Activated CD4-positive, alpha-beta T cell treated with anti-CD3 and anti-CD28 coated beads, Interleukin-2, amount 10 ng/mL, durations not matched to agents 24 days and 14 days (primary cell): ENCODE measurements at regions of chr3 and their contacts with region 1.

Region 1: GRCh38 chr3:8111069-8111798 is 390.4 kb upstream of the LMCD1 start:
- DNase-seq: peak; percentile 86
- H3K4me3 Mint-ChIP-seq: peak overlapping the region; percentile 27
- H3K27ac Mint-ChIP-seq: no peak overlapping the region
- H3K4me1 Mint-ChIP-seq: peaks cover 2% of the 10 kb centered on the region
- H3K27me3 Mint-ChIP-seq: no peaks in the 10 kb centered on the region

Region 2: DNA sequence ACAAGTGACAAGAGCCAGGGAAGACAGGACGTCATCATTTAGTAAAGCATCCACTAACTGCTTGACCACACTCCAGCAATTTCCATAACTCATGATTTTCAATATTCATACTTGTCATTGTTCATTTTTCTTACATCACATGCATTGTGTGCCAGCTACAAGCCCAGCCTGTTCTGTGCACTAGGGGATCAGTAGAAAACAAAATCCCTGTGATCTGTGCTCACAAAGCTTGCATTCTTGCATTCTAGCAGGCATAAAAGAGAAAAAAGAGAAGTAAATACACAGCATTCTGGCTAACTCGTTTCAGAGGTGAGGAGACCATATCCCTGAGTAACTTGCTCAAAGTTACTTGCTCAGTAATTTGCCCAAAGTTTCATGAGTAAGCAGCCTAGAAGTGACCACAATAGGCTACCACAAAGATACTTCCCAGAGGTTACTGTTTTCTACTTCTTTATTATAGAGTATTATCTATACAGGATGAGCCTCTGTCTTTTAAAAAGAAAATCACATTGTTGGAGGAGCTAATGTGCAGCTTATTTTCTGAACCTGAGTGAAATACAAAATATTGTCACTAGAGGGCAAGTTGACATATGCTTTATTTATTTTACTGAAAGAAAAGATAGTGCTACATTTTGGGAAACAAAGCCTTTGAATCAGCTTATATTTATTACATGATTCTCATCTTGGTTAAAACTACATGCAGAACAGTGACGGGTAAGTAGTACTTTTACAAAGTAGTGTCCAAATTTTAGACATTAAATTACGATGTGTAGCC is 311.0 kb before region 1 on chr3:
- intact Hi-C with region 1: loop called (anchors 1 kb)
- DNase-seq: no peak
- H3K4me3 Mint-ChIP-seq: no peak overlapping the region
- H3K27ac Mint-ChIP-seq: no peak overlapping the region
- H3K4me1 Mint-ChIP-seq: no peaks in the 10 kb centered on the region
- H3K27me3 Mint-ChIP-seq: no peaks in the 10 kb centered on the region

Region 3: DNA sequence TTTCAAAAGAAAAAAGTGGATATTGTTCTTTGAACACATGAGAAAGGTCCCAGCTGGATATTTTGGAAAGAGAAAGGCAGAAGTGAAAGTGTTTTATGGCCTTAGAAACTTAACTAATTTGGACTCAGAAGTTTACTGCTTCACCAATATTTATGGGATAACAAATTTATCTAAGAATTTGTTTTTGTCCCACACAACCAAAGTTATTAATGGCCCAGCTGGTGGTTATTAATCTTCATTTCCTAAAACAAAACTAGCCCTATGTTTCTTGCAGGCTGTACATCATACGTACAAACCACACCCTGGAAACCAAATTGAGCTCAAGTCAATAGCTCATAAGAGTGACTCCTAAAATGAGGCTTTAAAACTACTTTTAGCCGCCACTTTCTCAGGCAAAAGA is 17.5 kb after region 1 on chr3:
- intact Hi-C with region 1: no loop called
- DNase-seq: no peak
- H3K4me3 Mint-ChIP-seq: no peak overlapping the region
- H3K27ac Mint-ChIP-seq: no peak overlapping the region
- H3K4me1 Mint-ChIP-seq: no peaks in the 10 kb centered on the region
- H3K27me3 Mint-ChIP-seq: no peaks in the 10 kb centered on the region